ENCODE measurements at regions of chr1 and their contacts with region 1.

Region 1: GRCh38 chr1:228486596-228487335 is 416 bp upstream of the RNF187 start:
- DNase-seq: peak; percentile 93
- H3K4me3 Mint-ChIP-seq: peak overlapping the region; percentile 93
- H3K27ac Mint-ChIP-seq: peak overlapping the region; percentile 99
- H3K4me1 Mint-ChIP-seq: peaks cover 39% of the 10 kb centered on the region
- H3K27me3 Mint-ChIP-seq: no peaks in the 10 kb centered on the region

Region 2: DNA sequence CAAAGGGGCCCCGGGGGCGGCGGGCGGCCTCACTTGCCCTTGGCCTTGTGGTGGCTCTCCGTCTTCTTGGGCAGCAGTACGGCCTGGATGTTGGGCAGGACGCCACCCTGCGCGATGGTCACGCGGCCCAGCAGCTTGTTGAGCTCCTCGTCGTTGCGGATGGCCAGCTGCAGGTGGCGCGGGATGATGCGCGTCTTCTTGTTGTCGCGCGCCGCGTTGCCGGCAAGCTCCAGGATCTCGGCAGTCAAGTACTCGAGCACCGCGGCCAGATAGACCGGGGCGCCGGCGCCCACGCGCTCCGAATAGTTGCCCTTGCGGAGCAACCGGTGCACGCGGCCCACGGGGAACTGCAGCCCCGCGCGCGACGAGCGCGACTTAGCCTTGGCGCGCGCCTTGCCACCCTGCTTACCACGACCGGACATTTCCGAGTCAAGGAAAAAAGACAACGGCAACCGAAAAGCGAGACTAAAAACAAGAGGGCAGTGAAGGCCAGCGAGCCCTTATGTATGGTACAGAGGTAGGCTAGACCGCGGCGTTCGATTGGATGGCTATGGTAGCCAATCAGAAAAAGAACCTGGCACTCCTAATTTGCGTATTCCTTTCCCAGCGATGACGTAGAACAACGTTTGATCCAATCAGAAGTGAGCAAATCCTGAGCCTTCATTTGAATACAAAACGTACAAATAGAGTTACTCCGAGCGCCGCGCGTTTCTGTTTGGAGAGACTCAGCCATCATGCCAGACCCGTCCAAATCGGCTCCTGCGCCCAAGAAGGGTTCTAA is 29.2 kb before region 1 on chr1:
- intact Hi-C with region 1: loop called (anchors 1 kb)
- DNase-seq: peak; percentile 97
- H3K4me3 Mint-ChIP-seq: peak overlapping the region; percentile 97
- H3K27ac Mint-ChIP-seq: peak overlapping the region; percentile 99
- H3K4me1 Mint-ChIP-seq: peaks cover 47% of the 10 kb centered on the region
- H3K27me3 Mint-ChIP-seq: peaks cover 3% of the 10 kb centered on the region

Region 3: GRCh38 chr1:228464487-228464983 is 22.2 kb before region 1 on chr1:
- intact Hi-C with region 1: loop called (anchors 1 kb)
- DNase-seq: peak; percentile 97
- H3K4me3 Mint-ChIP-seq: peak overlapping the region; percentile 87
- H3K27ac Mint-ChIP-seq: peak overlapping the region; percentile 88
- H3K4me1 Mint-ChIP-seq: peaks cover 50% of the 10 kb centered on the region
- H3K27me3 Mint-ChIP-seq: peaks cover 12% of the 10 kb centered on the region

Region 4: GRCh38 chr1:228471762-228472398 is 14.9 kb before region 1 on chr1:
- intact Hi-C with region 1: loop called (anchors 1 kb)
- DNase-seq: peak; percentile 83
- H3K4me3 Mint-ChIP-seq: no peak overlapping the region
- H3K27ac Mint-ChIP-seq: peak overlapping the region; percentile 29
- H3K4me1 Mint-ChIP-seq: peaks cover 24% of the 10 kb centered on the region
- H3K27me3 Mint-ChIP-seq: peaks cover 21% of the 10 kb centered on the region

Region 5: GRCh38 chr1:228510101-228510802 is 23.5 kb after region 1 on chr1:
- intact Hi-C with region 1: no loop called
- DNase-seq: no peak
- H3K4me3 Mint-ChIP-seq: no peak overlapping the region
- H3K27ac Mint-ChIP-seq: no peak overlapping the region
- H3K4me1 Mint-ChIP-seq: peaks cover 24% of the 10 kb centered on the region
- H3K27me3 Mint-ChIP-seq: peaks cover 26% of the 10 kb centered on the region

Region 6: DNA sequence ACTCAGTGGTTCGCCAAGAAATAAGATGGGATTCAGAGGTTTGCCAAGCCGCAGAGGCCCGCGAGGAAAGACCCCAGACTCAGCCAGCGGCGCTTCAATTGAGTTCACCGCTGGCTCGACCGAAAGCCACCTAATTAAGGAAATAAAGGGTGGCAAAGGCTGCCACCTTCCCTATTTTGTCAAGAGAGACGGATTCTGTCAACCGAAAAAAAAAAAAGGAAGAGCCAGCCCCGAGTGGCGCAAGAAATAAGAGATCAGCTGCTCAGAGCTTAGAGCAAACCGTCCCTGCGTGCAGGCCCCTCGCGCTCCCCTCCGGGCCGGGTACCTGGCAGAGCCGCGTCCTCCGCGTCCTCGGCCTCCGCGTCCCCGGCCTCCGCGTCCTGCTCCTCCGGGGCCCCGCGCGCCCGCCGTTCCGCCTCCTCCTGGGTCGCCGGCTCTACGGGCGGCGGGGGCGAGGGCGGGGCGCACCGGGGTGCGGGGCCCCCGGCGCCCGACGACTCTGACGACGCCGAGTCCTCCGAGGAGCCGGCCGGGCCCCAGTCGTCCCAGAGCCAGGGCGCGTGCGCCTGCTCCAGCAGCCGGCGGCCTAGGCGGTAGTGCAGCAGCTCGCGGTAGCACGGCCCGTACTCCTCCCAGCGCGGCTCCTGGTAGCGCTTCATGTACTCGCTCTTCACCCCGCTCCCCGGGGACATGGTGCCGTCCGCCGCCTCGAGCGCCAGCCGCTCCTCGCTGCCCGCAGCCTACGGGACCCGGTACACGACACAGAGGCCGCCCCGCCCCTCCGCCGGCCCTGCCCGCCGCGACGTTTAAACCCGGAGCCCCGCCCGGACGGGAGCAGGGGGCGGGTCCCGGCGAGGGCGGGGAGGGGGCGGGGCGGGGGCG is 855.2 kb after region 1 on chr1:
- intact Hi-C with region 1: loop called (anchors 10 kb)
- DNase-seq: peak; percentile 96
- H3K4me3 Mint-ChIP-seq: peak overlapping the region; percentile 91
- H3K27ac Mint-ChIP-seq: peak overlapping the region; percentile 94
- H3K4me1 Mint-ChIP-seq: peaks cover 48% of the 10 kb centered on the region
- H3K27me3 Mint-ChIP-seq: peaks cover 20% of the 10 kb centered on the region